Spleen (tissue), 13 donors: ENCODE measurements at regions of chr3 and their contacts with region 1.

Region 1: GRCh38 chr3:123328851-123329635 is 119.8 kb downstream of the ADCY5 start:
- DNase-seq: peak; percentile 92
- H3K4me3 ChIP-seq: no peak overlapping the region
- H3K27ac ChIP-seq: peak overlapping the region in 2 of 8 donors; percentile 47 to 76
- H3K4me1 ChIP-seq: peaks cover 0 to 28% (median 14%) of the 10 kb centered on the region in 6 donors
- H3K27me3 ChIP-seq: peaks cover 0 to 10% (median 0%) of the 10 kb centered on the region in 7 donors
- CTCF ChIP-seq: peak; percentile 75 to 97 (median 91)
- POLR2A ChIP-seq: no peak

Region 2: GRCh38 chr3:123489400-123490004 is 160.5 kb after region 1 on chr3:
- intact Hi-C with region 1: loop called (anchors 5 kb)
- DNase-seq: no peak
- H3K4me3 ChIP-seq: no peak overlapping the region
- H3K27ac ChIP-seq: no peak overlapping the region
- H3K4me1 ChIP-seq: peaks cover 0 to 9% (median 0%) of the 10 kb centered on the region in 6 donors
- H3K27me3 ChIP-seq: no peaks in the 10 kb centered on the region
- CTCF ChIP-seq: peak; percentile 36 to 86 (median 77)
- POLR2A ChIP-seq: no peak

Region 3: DNA sequence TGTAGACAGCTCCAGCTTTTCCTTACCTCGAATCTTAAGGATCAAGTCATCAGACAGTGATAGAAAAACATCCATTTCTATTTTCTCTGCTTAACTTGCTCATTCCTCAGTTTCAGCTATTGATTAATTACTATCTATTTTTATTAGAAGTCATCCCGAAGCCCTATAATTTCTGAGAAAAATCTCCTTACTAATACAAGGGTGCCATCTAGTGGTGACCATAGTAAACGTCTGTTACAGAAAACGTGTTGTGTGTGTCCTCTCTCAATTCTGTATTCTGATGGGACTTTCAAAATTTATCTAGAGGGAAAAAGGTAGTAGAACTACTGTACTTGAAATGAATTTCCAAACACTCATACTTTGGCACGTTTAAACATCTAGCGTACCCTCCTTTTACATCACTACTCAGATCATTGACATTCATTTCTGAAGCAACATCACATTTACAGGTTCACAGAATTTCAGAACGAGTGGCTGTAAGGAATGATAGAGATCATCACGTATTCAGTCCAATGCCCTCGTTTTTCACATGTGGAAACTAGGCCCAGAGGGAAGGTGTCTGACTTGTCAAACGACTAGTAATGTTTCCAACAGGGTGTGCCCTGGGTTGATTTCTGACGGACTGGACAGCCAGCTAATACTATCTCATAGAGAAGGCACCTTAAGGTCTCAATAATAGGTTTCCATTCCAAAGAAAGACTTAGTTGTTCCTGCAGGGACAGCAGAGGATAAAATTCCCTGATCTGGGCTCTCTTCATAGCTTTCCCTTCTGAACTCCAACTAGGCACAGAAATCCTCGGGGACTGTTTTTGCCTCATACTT is 230.2 kb after region 1 on chr3:
- intact Hi-C with region 1: loop called (anchors 5 kb)
- DNase-seq: no peak
- H3K4me3 ChIP-seq: no peak overlapping the region
- H3K27ac ChIP-seq: no peak overlapping the region
- H3K4me1 ChIP-seq: peaks cover 0 to 6% (median 2%) of the 10 kb centered on the region in 6 donors
- H3K27me3 ChIP-seq: no peaks in the 10 kb centered on the region
- CTCF ChIP-seq: peak; percentile 30 to 83 (median 73)
- POLR2A ChIP-seq: no peak